ENCODE measurements at regions of chr7 and their contacts with region 1.

Region 1: DNA sequence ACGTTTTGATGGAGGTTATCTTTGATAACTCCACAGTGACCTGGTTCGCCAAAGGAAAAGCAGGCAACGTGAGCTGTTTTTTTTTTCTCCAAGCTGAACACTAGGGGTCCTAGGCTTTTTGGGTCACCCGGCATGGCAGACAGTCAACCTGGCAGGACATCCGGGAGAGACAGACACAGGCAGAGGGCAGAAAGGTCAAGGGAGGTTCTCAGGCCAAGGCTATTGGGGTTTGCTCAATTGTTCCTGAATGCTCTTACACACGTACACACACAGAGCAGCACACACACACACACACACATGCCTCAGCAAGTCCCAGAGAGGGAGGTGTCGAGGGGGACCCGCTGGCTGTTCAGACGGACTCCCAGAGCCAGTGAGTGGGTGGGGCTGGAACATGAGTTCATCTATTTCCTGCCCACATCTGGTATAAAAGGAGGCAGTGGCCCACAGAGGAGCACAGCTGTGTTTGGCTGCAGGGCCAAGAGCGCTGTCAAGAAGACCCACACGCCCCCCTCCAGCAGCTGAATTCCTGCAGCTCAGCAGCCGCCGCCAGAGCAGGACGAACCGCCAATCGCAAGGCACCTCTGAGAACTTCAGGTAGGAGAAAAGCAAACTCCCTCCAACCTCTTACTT is at the start of gene SERPINE1:
- DNase-seq: peak; percentile 99
- H3K4me3 Mint-ChIP-seq: peak within 1 kb of the TSS; percentile 76
- H3K27ac Mint-ChIP-seq: peak within 1 kb of the TSS; percentile 85
- H3K4me1 Mint-ChIP-seq: peaks cover 49% of the 10 kb centered on the region
- H3K27me3 Mint-ChIP-seq: no peaks in the 10 kb centered on the region
- CTCF ChIP-seq: peak; percentile 37
- total RNA-seq, gene SERPINE1: 56.7 and 80.6 TPM in 2 replicates

Region 2: DNA sequence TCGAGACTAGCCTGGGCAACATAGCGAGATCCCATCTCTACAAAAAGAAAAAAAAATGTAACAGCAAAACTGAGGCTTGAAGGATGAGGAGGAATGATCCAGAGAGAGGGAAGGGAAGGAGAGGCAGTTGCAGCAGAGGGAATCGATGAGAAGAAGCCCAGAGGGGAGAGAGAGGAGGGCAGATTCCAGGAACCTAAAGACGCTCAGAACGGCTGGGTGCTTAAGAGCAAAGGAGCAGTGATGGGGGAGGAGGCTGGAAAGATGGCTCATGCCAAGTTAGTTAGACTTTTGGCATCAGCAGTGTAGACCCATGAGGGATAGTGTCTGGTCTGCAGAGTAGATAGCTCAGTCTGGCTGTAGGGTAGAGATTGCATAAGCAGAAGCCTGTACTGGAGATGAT is 117.1 kb before region 1 on chr7:
- CTCF ChIA-PET with region 1: no interaction called
- POLR2A ChIA-PET with region 1: no interaction called
- intact Hi-C with region 1: no loop called
- DNase-seq: no peak
- H3K4me3 Mint-ChIP-seq: no peak overlapping the region
- H3K27ac Mint-ChIP-seq: no peak overlapping the region
- H3K4me1 Mint-ChIP-seq: no peaks in the 10 kb centered on the region
- H3K27me3 Mint-ChIP-seq: peaks cover 45% of the 10 kb centered on the region
- CTCF ChIP-seq: no peak

Region 3: GRCh38 chr7:101099969-101100781 is 26.6 kb before region 1 on chr7:
- CTCF ChIA-PET with region 1: interaction called, 3 read pairs
- POLR2A ChIA-PET with region 1: interaction called, 24 read pairs
- intact Hi-C with region 1: loop called (anchors 2 kb)
- DNase-seq: peak; percentile 97
- H3K4me3 Mint-ChIP-seq: peak overlapping the region; percentile 54
- H3K27ac Mint-ChIP-seq: peak overlapping the region; percentile 73
- H3K4me1 Mint-ChIP-seq: peaks cover 29% of the 10 kb centered on the region
- H3K27me3 Mint-ChIP-seq: no peaks in the 10 kb centered on the region
- CTCF ChIP-seq: no peak

Region 4: DNA sequence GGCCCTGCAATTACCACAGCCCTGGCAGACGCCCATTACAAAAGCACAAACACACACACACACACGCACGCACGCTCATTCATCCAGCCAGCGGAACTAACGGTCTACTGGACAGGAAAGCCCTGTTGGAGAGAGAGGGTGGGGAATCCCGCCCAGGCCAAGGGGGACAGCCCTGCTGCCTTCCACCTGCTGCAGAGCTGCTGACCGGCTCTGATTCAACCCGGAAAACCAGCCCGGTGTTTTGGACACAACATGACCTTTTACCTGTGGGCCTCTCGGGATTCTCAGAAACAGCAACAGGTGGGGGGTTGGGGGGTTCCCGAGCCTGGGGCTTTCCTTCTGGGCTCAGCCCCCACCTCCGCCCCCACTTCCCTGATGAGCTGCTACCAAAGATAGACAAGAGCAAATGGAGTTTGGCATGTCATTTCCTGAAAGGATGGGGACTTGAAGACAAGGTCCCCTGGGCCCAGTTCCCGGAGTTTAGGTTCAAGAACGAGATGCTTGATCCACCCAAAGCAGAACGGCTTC is 18.4 kb before region 1 on chr7:
- CTCF ChIA-PET with region 1: interaction called, 6 read pairs
- POLR2A ChIA-PET with region 1: interaction called, 19 read pairs
- intact Hi-C with region 1: no loop called
- DNase-seq: peak; percentile 75
- H3K4me3 Mint-ChIP-seq: no peak overlapping the region
- H3K27ac Mint-ChIP-seq: peak overlapping the region; percentile 63
- H3K4me1 Mint-ChIP-seq: peaks cover 31% of the 10 kb centered on the region
- H3K27me3 Mint-ChIP-seq: no peaks in the 10 kb centered on the region
- CTCF ChIP-seq: no peak

Measured in MCF 10A (cell line).